Dendritic cell treated with granulocyte-macrophage colony-stimulating factor and Interleukin-4, amounts not matched to agents 40 ng/mL and 50 ng/mL, for 4 days (primary cell): ENCODE measurements at regions of chr2 and their contacts with region 1.

Region 1: GRCh38 chr2:74250189-74250631 is 51.8 kb downstream of the MTHFD2 start:
- H3K4me3 Mint-ChIP-seq: no peak overlapping the region
- H3K27ac Mint-ChIP-seq: no peak overlapping the region
- H3K4me1 Mint-ChIP-seq: peaks cover 7% of the 10 kb centered on the region
- H3K27me3 Mint-ChIP-seq: no peaks in the 10 kb centered on the region

Region 2: GRCh38 chr2:74304332-74305148 is 54.3 kb after region 1 on chr2:
- intact Hi-C with region 1: no loop called
- H3K4me3 Mint-ChIP-seq: no peak overlapping the region
- H3K27ac Mint-ChIP-seq: no peak overlapping the region
- H3K4me1 Mint-ChIP-seq: no peaks in the 10 kb centered on the region
- H3K27me3 Mint-ChIP-seq: no peaks in the 10 kb centered on the region

Region 3: DNA sequence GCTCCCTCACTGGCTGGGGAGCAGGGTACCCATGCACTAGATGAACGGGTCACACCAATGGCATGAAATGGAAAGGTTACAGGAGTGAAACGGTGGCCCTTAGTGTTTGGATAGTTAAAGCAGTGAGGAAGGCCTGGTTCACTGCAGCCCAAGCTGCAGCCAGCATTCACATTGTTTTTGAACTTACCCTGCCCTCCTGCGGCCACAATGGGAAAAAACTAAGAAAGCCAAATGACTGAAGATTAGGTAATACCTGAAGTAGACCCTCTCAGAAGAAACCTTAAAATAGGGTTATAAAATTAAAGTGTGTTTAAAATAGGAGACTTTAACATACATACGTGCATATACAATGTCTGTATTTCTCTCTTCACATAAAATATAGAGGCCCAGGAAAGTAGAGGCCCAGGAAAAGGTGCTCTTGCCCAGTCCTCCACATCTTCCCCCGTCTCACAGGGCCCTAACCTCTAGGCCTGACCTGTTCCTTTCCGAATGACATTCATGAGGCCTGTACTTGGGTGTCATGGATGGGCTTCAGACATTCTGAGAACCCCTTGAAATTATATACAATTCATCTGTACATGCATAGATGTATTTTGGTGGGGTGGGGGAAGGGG is 337.6 kb after region 1 on chr2:
- intact Hi-C with region 1: loop called (anchors 5 kb)
- H3K4me3 Mint-ChIP-seq: no peak overlapping the region
- H3K27ac Mint-ChIP-seq: no peak overlapping the region
- H3K4me1 Mint-ChIP-seq: peaks cover 44% of the 10 kb centered on the region
- H3K27me3 Mint-ChIP-seq: peaks cover 2% of the 10 kb centered on the region